ENCODE measurements at regions of chr1 and their contacts with region 1.

Region 1: GRCh38 chr1:156115886-156116374 is 1.4 kb downstream of the LMNA start:
- DNase-seq: peak; percentile 85

Region 2: GRCh38 chr1:156136970-156137483 is 21.1 kb after region 1 on chr1:
- intact Hi-C with region 1: loop called in 1 of 2 experiments (anchors 1 kb)
- DNase-seq: no peak

Measured in posterior vena cava (tissue), 2 donors.